ENCODE measurements at regions of chr2 and their contacts with region 1.

Region 1: DNA sequence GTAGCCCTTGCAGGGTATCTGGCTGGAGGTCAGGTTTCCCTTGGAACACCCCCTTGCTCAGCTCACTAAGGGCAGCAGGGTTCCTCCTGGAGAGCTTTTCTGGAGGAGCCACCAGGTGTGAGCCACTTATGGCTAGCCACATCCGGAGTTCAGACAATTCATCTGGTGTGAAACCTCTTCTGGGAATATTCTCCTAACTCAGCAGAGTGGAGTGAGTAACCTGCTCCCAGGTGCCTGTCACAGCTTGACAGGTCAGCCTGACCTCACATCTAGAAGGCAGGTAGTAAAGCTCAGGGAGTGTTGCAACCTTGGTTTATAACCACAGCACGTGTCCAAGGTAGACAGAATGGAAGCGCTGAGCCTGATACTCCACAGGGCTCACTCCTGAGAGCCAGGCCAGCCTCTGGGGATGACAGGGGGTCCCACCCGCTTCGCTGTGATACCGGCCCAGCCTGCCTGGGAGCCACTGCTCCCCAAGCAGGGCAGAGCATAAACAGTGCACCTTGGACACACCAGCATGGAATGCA is 62.6 kb upstream of the TGFA start:
- DNase-seq: no peak
- H3K4me3 Mint-ChIP-seq: no peak overlapping the region
- H3K27ac Mint-ChIP-seq: no peak overlapping the region
- H3K4me1 Mint-ChIP-seq: peaks cover 3% of the 10 kb centered on the region
- H3K27me3 Mint-ChIP-seq: peaks cover 14% of the 10 kb centered on the region

Region 2: GRCh38 chr2:70340921-70341765 is 275.1 kb before region 1 on chr2:
- CTCF ChIA-PET with region 1: interaction called, 34 read pairs
- POLR2A ChIA-PET with region 1: no interaction called
- DNase-seq: peak; percentile 30
- H3K4me3 Mint-ChIP-seq: no peak overlapping the region
- H3K27ac Mint-ChIP-seq: no peak overlapping the region
- H3K4me1 Mint-ChIP-seq: no peaks in the 10 kb centered on the region
- H3K27me3 Mint-ChIP-seq: peaks cover 14% of the 10 kb centered on the region

Region 3: GRCh38 chr2:70425687-70426301 is 190.4 kb before region 1 on chr2:
- CTCF ChIA-PET with region 1: no interaction called
- POLR2A ChIA-PET with region 1: no interaction called
- DNase-seq: no peak
- H3K4me3 Mint-ChIP-seq: no peak overlapping the region
- H3K27ac Mint-ChIP-seq: no peak overlapping the region
- H3K4me1 Mint-ChIP-seq: no peaks in the 10 kb centered on the region
- H3K27me3 Mint-ChIP-seq: peaks cover 3% of the 10 kb centered on the region

Measured in activated CD4-positive, alpha-beta memory T cell treated with anti-CD3 and anti-CD28 coated beads, Interleukin-2, amount 10 ng/mL, durations not matched to agents 7 days and 5 days (primary cell).